ENCODE measurements at regions of chr2 and their contacts with region 1.

Region 1: GRCh38 chr2:65264821-65265670 is 37.4 kb downstream of the ACTR2 start:
- DNase-seq: peak in 2 of 9 experiments; percentile 55 to 68
- ATAC-seq: no peak
- H3K4me3 ChIP-seq: no peak overlapping the region
- H3K4me3 Mint-ChIP-seq: no peak overlapping the region
- H3K27ac ChIP-seq: no peak overlapping the region
- H3K27ac Mint-ChIP-seq: peak overlapping the region; percentile 66
- H3K4me1 ChIP-seq: no peaks in the 10 kb centered on the region
- H3K4me1 Mint-ChIP-seq: peaks cover 11% of the 10 kb centered on the region
- H3K27me3 ChIP-seq: no peaks in the 10 kb centered on the region
- H3K27me3 Mint-ChIP-seq: no peaks in the 10 kb centered on the region
- CTCF ChIP-seq: peak; percentile 75

Region 2: GRCh38 chr2:65186872-65187851 is 77.9 kb before region 1 on chr2:
- CTCF ChIA-PET with region 1: no interaction called
- POLR2A ChIA-PET with region 1: no interaction called
- intact Hi-C with region 1: loop called in 1 of 2 experiments (anchors 2 kb)
- DNase-seq: peak; percentile 35 to 74 (median 63)
- ATAC-seq: peak; percentile 88
- H3K4me3 ChIP-seq: no peak overlapping the region
- H3K4me3 Mint-ChIP-seq: no peak overlapping the region
- H3K27ac ChIP-seq: no peak overlapping the region
- H3K27ac Mint-ChIP-seq: no peak overlapping the region
- H3K4me1 ChIP-seq: peaks cover 6% of the 10 kb centered on the region
- H3K4me1 Mint-ChIP-seq: peaks cover 9% of the 10 kb centered on the region
- H3K27me3 ChIP-seq: no peaks in the 10 kb centered on the region
- H3K27me3 Mint-ChIP-seq: peaks cover 10% of the 10 kb centered on the region
- CTCF ChIP-seq: peak; percentile 60

Region 3: GRCh38 chr2:65350684-65351083 is 85.6 kb after region 1 on chr2:
- CTCF ChIA-PET with region 1: no interaction called
- POLR2A ChIA-PET with region 1: no interaction called
- intact Hi-C with region 1: loop called (anchors 5 to 10 kb)
- DNase-seq: peak in 1 of 9 experiments; percentile 18
- ATAC-seq: no peak
- H3K4me3 ChIP-seq: no peak overlapping the region
- H3K4me3 Mint-ChIP-seq: no peak overlapping the region
- H3K27ac ChIP-seq: no peak overlapping the region
- H3K27ac Mint-ChIP-seq: no peak overlapping the region
- H3K4me1 ChIP-seq: no peaks in the 10 kb centered on the region
- H3K4me1 Mint-ChIP-seq: peaks cover 2% of the 10 kb centered on the region
- H3K27me3 ChIP-seq: no peaks in the 10 kb centered on the region
- H3K27me3 Mint-ChIP-seq: peaks cover 10% of the 10 kb centered on the region
- CTCF ChIP-seq: no peak

Region 4: DNA sequence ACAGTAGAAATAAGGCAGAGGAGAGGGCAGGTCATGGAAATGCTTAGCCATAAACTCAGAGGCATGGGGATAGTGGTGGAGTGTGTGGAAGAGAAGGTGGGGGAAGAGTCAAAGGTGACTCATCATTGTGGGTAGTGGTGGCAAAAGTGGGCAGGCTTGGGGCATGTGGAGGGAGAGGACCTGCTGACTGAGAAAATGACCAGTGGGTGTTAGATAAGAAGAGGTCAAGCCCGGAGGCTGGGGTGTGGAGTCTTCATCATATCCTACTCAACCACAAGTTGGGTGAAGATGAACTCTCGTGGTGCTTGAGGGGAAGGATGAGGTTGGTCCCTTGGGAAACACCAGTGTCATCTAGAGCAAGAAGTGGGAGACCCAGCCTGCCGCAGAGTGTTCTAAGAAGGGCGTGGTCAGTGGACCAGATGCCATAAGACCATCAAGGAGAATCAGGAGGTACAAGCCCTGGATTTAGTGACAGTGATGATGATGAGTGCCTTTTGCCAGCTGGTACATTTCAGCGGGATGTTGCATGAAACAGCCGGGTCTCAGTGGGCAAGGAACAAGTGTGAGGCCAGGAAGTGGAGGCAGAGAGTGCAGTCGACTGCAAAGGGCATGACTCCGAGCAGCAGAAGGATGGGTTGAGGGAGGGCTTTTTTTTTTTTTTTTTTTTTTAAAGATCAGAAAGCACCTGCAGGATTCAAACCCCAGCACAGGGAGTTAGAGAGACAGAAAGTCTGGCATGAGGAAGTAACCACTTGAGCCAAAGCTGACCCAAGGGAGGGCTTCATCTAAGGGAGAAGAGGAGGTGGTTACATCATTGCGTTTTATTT is 289.9 kb after region 1 on chr2:
- CTCF ChIA-PET with region 1: no interaction called
- POLR2A ChIA-PET with region 1: no interaction called
- intact Hi-C with region 1: loop called in 1 of 2 experiments (anchors 1 kb)
- DNase-seq: no peak
- ATAC-seq: no peak
- H3K4me3 ChIP-seq: no peak overlapping the region
- H3K4me3 Mint-ChIP-seq: no peak overlapping the region
- H3K27ac ChIP-seq: no peak overlapping the region
- H3K27ac Mint-ChIP-seq: no peak overlapping the region
- H3K4me1 ChIP-seq: peaks cover 3% of the 10 kb centered on the region
- H3K4me1 Mint-ChIP-seq: peaks cover 4% of the 10 kb centered on the region
- H3K27me3 ChIP-seq: no peaks in the 10 kb centered on the region
- H3K27me3 Mint-ChIP-seq: peaks cover 10% of the 10 kb centered on the region
- CTCF ChIP-seq: no peak

Measured in CD8-positive, alpha-beta T cell (primary cell).